AG04449 (cell line): ENCODE measurements at regions of chr21 and their contacts with region 1.

Region 1: GRCh38 chr21:45098867-45099266 is 24.5 kb downstream of the ADARB1 start:
- DNase-seq: no peak
- H3K4me3 ChIP-seq: no peak overlapping the region
- CTCF ChIP-seq: peak; percentile 36

Region 2: GRCh38 chr21:44730951-44731579 is 367.8 kb before region 1 on chr21:
- CTCF ChIA-PET with region 1: no interaction called
- POLR2A ChIA-PET with region 1: no interaction called
- DNase-seq: no peak
- H3K4me3 ChIP-seq: no peak overlapping the region
- CTCF ChIP-seq: no peak

Region 3: DNA sequence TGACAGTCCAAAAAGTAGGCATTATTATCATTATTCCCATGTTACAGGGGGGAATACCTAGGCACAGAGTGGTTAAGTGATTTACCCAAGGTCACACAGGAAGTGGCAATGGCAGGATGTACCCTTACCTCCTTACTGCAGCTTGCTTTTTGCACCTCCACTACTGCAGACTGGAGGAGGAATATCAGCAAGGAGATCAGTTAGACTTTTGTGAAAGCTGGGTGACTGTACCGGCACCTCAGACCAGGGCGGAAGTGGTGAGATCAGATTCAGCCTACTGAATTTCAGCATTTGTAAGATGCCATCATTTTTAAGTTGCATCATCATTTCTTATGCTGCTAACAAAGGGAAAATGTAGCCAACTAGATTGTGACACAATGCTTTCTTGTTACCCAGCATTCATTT is 20.0 kb before region 1 on chr21:
- CTCF ChIA-PET with region 1: interaction called, 15 read pairs
- POLR2A ChIA-PET with region 1: no interaction called
- DNase-seq: no peak
- H3K4me3 ChIP-seq: no peak overlapping the region
- CTCF ChIP-seq: no peak

Region 4: GRCh38 chr21:45087022-45087823 is 11.6 kb before region 1 on chr21:
- CTCF ChIA-PET with region 1: interaction called, 22 read pairs
- POLR2A ChIA-PET with region 1: no interaction called
- DNase-seq: no peak
- H3K4me3 ChIP-seq: no peak overlapping the region
- CTCF ChIP-seq: no peak

Region 5: GRCh38 chr21:45120975-45121374 is 22.1 kb after region 1 on chr21:
- CTCF ChIA-PET with region 1: interaction called, 50 read pairs
- POLR2A ChIA-PET with region 1: no interaction called
- DNase-seq: no peak
- H3K4me3 ChIP-seq: no peak overlapping the region
- CTCF ChIP-seq: no peak